ENCODE measurements at regions of chr12 and their contacts with region 1.

Region 1: DNA sequence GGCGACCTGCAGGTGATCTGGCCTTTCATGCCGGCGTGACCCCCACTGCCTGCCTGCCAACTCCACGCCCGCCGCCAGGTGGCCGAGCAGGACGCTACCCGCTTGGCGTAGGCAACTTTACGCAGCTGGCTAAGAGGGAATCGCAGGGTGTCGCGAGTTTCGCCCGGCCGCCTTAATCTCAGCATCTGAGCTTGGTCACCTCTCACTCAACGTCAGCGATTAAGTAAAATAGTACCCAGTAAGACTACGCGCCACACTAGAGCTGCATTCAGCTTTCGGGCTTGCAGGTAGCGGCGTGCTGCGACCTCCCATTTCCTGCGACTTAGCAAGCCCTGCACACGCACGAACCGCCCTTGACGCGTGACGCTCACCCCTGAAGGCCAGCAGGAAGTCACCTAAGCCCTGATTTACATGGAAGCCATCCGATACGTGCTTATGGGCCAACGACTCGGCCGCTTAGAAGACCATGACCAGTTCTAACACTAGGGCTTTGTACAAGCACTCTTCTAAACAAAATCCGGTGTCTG is 33.2 kb downstream of the WBP11 start:
- H3K4me3 ChIP-seq: peak overlapping the region; percentile 76
- H3K27ac ChIP-seq: peak overlapping the region; percentile 76
- H3K4me1 ChIP-seq: peaks cover 5% of the 10 kb centered on the region; the same call in 1 of the 2 replicates
- CTCF ChIP-seq: peak; percentile 87; the same call in 1 of the 2 replicates

Region 2: DNA sequence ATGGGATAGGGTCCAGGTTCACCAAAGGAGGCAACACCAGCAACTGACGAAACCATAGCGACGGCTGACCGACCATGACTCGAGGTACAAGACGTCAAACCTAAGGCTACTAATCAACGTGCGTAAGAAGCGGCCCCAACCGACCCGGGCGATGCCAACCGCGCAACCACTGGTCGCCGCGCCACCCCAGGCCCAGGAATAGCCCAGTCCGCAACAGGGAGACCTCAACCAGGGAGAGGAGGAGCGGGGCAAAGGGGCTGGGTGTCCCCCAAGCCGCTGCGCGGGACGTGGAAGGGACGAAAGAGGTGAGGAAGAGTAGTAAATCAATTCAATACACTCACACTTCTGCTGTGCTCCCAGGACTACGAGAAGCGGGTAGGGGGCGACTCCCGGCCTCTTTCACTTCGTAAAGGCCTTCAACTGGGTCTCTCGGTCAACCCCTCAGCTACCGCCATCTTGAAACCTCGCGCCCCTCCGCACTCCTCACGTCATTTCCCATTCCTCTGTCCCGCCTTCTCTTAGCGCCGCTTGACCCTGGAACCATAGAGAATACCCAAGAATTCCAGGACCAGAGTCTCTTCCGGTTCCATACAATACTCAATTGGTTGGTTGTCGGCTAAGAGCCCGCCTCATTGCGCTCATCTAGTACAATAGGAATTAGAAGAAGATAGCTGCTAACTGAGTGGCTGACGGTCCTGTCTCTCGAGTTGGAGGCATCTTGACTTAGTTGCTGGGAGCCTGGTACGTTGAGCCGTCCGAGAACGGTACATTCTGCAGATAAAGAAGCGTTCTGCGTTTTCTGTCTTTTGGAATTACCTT is 33.2 kb after region 1 on chr12 and contains the starts of genes C12orf60 and WBP11:
- CTCF ChIA-PET with region 1: interaction called, 5 read pairs
- POLR2A ChIA-PET with region 1: interaction called, 32 read pairs
- H3K4me3 ChIP-seq: peak within 1 kb of the TSS; percentile 53
- H3K27ac ChIP-seq: peak within 1 kb of the TSS; percentile 87
- H3K4me1 ChIP-seq: peaks cover 2% of the 10 kb centered on the region; the same call in 1 of the 2 replicates
- CTCF ChIP-seq: no peak